ENCODE measurements at regions of chr7 and their contacts with region 1.

Region 1: DNA sequence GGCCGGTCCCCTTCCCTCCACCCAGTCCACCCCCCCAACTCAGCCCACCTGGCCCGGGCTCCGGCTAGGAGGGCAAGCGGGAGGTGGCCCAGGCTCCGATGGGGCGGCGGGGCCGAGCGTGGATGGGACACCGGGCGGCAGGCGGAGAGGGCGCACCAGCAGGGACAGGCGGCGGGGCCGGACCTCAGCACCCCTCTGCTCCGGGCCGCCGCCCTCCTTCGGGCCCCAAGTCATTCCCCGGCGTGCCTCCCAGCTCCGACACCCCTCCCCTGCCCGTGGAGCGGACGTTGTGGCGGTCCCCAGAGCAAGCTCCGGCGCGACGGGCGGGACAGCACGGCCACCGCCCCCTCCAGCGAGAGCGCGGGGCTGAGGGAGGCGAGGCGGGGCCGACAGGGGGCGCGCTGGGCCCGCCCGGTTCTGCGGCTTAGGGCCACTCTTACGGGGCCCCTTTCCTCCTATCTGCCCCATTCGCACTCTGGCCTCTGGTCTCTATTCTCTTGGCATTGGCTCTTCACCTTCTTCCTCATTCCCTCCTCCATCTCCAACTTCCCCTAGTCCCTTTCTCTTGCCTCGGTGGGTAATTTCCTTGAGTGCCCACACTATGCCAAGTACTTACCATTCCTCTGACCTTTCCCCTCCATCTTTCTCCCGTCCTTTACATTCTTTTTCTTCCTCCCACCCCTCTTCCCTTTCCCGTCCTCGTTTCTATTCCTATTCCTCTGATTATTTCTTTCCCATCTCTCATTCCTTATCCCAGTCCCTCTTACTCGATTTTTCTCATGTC is 701 bp upstream of the GBX1 start:
- DNase-seq: no peak
- H3K4me3 ChIP-seq: peak overlapping the region; percentile 28
- CTCF ChIP-seq: peak; percentile 61

Region 2: GRCh38 chr7:150994141-150994964 is 173.8 kb before region 1 on chr7:
- in situ Hi-C with region 1: no loop called
- DNase-seq: no peak
- H3K4me3 ChIP-seq: no peak overlapping the region
- CTCF ChIP-seq: no peak

Region 3: DNA sequence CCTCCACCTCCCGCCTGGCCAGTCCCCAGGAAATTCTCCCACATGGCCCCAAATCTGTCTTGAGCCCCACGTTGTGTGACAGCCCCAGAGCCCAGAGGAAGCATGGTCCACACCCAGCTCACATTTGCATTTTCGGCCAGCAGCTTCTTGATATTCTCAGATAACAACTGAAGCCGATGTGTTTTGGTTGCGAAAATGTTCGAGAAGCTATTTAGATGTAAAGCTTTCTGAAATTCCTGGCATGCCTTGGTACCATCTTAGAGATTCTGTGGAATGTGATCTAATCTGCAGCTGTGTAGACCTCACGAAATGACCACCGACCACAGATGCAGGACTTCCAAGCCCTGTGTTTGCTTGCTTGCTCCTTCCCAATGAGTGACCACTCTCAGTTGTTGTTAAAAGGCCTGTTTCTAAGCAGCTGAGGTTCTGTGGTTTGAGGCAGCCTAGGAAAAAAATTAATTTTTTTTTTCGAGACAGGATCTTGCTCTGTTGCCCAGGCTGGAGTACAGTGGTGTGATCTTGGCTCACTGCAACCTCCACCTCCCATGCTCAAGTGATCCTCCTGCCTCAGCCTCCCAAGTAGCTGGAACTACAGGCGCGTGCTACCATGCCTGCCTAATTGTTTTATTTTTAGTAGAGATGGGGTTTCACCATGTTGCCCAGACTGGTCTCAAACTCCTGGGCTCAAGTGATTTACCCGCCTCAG is 100.0 kb before region 1 on chr7:
- in situ Hi-C with region 1: loop called (anchors 5 kb)
- DNase-seq: peak; percentile 63
- H3K4me3 ChIP-seq: no peak overlapping the region
- CTCF ChIP-seq: no peak

Region 4: DNA sequence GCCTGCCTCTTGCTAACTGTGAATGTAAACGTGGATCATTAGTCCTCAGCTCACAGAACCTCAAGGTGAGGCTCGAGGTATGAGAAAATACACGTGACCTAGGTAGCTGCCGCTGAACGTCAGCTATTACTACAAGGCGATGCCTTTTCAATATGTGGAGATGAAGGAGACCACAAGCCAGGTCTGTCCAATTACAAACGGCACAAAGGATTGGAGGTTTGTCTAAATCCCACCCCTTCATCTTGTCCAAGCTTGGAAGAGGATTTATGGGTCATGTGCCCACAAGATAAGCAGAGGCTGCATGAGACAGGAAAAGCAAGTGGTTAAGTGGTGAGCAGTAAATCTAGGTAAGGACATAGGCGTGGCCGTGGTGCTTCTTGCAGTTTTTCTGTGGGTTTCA is 38.7 kb after region 1 on chr7:
- in situ Hi-C with region 1: loop called (anchors 5 kb)
- DNase-seq: no peak
- H3K4me3 ChIP-seq: no peak overlapping the region
- CTCF ChIP-seq: no peak

Region 5: GRCh38 chr7:151226875-151227782 is 58.9 kb after region 1 on chr7 and contains the start of gene ABCF2:
- in situ Hi-C with region 1: no loop called
- DNase-seq: peak; percentile 98
- H3K4me3 ChIP-seq: peak within 1 kb of the TSS; percentile 84
- CTCF ChIP-seq: no peak

Region 6: DNA sequence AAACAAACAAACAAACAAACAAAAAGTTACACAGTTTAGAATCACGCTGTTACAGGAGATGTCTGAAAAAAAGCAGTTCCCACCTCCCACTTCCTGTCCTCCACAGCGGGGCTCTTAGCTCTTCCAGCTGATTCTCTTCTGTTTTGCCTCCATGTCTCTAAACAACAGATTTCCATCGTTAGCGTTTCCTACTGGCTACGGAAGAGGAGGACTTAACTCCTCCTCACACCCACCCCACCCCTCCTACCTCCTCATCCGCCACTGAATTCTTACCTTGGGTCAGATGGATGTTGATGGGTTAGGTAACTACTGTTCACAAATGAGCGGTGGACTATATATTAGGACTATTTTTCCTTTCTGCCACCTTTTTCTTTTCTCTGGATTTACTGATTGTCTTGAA is 136.7 kb after region 1 on chr7:
- in situ Hi-C with region 1: loop called (anchors 10 kb)
- DNase-seq: no peak
- H3K4me3 ChIP-seq: no peak overlapping the region
- CTCF ChIP-seq: no peak